HEK293 (cell line): ENCODE measurements at regions of chr19 and their contacts with region 1.

Region 1: GRCh38 chr19:29528350-29528945 is 2.7 kb downstream of the VSTM2B start:
- H3K4me3 ChIP-seq: peak overlapping the region; percentile 39
- H3K27ac ChIP-seq: peak overlapping the region; percentile 55; the same call in 1 of the 2 replicates
- H3K4me1 ChIP-seq: peaks cover 37% of the 10 kb centered on the region
- CTCF ChIP-seq: peak; percentile 99

Region 2: DNA sequence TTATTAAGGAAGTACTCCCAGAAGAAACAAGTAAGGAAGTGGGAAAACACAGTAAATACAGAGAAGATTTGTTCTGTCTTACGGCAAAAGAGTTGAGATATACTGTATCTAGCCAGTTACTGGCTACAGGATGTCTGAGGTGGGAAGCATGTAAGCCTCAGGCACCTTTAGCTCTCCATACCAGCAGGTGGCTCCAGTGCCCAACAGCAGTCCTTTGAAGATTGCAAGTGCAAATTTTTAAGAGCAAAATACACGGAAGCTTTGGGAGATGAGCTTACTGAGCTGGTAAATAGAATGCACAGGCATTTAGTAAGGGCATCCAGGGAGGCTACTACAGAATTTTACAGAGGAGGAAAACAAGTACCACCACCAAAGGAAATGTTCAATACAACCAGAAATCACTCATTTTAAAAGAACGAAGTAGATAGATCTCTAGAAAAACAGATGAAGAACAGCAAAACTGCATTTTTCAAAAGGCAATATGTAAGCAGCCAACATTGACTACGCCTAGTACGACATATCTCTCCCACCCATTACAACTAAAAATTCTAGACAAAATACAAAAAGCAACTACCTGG is 60.5 kb before region 1 on chr19:
- CTCF ChIA-PET with region 1: interaction called, 33 read pairs
- POLR2A ChIA-PET with region 1: interaction called, 6 read pairs
- H3K4me3 ChIP-seq: no peak overlapping the region
- H3K27ac ChIP-seq: no peak overlapping the region
- H3K4me1 ChIP-seq: 0 out of 2 replicates have a peak, but pooled peaks cover 3% of the 10 kb centered on the region
- CTCF ChIP-seq: peak; percentile 85

Region 3: DNA sequence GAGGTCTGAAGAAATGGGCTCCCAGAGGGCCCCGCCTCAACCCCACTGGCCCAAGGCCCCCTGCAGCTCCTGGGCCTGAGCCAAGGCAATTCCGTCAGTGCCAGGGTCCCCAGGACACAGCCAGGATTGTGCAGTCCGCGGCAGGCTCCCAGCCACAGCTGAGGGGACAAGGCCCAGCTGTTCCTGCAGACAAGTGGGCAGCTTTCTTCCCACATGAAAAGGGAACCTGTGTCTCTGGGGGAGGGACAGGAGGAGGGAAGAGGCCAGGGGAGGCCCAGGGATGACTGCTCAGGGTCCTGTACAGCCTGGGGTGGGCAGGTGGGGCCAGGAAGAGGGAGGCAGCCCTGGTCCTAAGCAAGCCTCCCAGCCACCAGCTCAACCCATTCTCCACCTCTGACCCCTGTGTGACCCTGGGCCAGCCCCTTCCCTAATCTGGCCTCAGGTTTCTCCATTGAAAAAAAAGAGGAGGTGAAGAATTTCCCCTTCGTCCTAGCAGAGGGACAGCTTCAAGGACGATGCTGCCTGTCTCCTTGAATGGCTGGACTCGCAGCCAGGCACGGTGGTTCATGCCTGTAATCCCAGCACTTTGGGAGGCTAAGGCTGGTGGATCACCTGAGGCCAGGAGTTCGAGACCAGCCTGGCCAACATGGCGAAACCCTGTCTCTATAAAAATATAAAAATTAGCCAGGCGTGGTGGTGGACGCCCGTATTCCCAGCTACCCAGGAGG is 23.2 kb before region 1 on chr19:
- CTCF ChIA-PET with region 1: interaction called, 15 read pairs
- POLR2A ChIA-PET with region 1: no interaction called
- H3K4me3 ChIP-seq: no peak overlapping the region
- H3K27ac ChIP-seq: no peak overlapping the region
- H3K4me1 ChIP-seq: no peaks in the 10 kb centered on the region
- CTCF ChIP-seq: no peak